K562 (cell line): ENCODE measurements at regions of chr1 and their contacts with region 1.

Region 1: GRCh38 chr1:58783993-58784757 is at the start of gene JUN:
- DNase-seq: peak; percentile 96 to 99 (median 98)
- ATAC-seq: peak; percentile 83
- H3K4me3 ChIP-seq: peak within 1 kb of the TSS; percentile 81
- H3K27ac ChIP-seq: peak within 1 kb of the TSS; percentile 96
- H3K4me1 ChIP-seq: peaks cover 9 to 37% of the 10 kb centered on the region in 2 experiments; a peak in 4 of 5 replicates
- H3K27me3 ChIP-seq: no peaks in the 10 kb centered on the region
- CTCF ChIP-seq: no peak; a peak in 1 of 6 replicates
- EP300 ChIP-seq: peak; percentile 39
- POLR2A ChIP-seq: peak; percentile 99
- RAD21 ChIP-seq: peak; percentile 17 to 29; a peak in 1 of 4 replicates
- polyA plus RNA-seq, gene JUN: 0.32 TPM

Region 2: GRCh38 chr1:58815069-58815685 is 31.0 kb after region 1 on chr1:
- CTCF ChIA-PET with region 1: no interaction called
- POLR2A ChIA-PET with region 1: interaction called, 3 read pairs
- in situ Hi-C with region 1: no loop called
- intact Hi-C with region 1: loop called (anchors 1 kb)
- DNase-seq: peak; percentile 83 to 91 (median 86)
- ATAC-seq: peak; percentile 89
- H3K4me3 ChIP-seq: peak overlapping the region; percentile 47
- H3K27ac ChIP-seq: peak overlapping the region; percentile 93
- H3K4me1 ChIP-seq: peaks cover 21 to 27% of the 10 kb centered on the region in 2 experiments
- H3K27me3 ChIP-seq: no peaks in the 10 kb centered on the region
- CTCF ChIP-seq: no peak
- EP300 ChIP-seq: peak; percentile 72
- POLR2A ChIP-seq: no peak
- RAD21 ChIP-seq: peak in 1 of 2 experiments; percentile 11; a peak in 1 of 4 replicates

Region 3: DNA sequence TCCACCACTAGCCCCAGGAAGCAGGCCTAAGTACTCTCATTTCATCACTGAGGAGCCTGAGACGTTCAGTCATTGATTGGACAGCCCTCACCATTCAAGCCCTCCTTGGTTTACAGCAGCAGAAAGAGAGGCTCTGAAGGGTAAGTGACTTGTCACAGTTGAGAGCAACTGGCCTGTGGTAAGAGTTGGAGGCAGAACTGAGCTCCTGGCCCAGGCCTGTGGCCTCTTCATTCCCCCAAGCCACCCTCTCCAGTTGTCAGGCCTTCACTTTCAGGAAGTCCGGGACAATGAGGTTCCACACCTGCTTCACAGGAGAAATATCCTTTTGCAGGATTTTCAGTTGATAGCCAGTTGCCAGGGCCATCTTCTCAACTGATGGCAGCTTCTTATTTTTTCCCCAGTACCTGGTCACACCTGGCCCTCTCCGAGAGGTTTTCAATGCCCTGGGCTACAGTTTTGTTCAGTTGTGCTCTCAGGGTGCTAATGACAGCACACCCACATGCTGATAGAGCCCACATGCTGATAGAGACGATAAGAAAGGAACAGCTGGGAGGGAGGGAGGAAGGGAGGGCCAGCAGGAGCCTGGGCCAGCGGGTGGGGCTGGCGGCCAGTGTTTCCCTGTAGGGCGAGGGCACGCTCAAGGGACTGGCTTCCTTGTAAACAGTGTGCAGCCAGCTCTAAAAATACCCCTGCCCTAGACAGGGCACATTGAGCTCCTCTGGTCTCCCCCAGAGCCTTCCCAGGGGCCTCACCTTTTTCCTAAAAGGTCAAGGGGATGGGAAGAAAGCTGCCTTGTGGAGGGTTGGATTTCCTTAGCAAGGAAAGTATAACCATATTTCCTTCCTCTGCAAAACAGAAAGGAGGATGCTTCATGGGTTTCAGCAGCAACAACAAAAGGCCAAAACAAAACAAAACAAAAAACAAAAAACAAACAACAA is 112.3 kb after region 1 on chr1:
- CTCF ChIA-PET with region 1: no interaction called
- POLR2A ChIA-PET with region 1: interaction called, 9 read pairs
- in situ Hi-C with region 1: no loop called
- intact Hi-C with region 1: loop called (anchors 2 kb)
- DNase-seq: peak; percentile 75 to 83 (median 80)
- ATAC-seq: peak; percentile 54
- H3K4me3 ChIP-seq: no peak overlapping the region
- H3K27ac ChIP-seq: peak overlapping the region; percentile 56
- H3K4me1 ChIP-seq: peaks cover 54 to 83% of the 10 kb centered on the region in 2 experiments
- H3K27me3 ChIP-seq: no peaks in the 10 kb centered on the region
- CTCF ChIP-seq: peak in 1 of 3 experiments; percentile 2; a peak in 1 of 6 replicates
- EP300 ChIP-seq: peak; percentile 73
- POLR2A ChIP-seq: no peak
- RAD21 ChIP-seq: peak; percentile 33 to 53

Region 4: GRCh38 chr1:59076612-59077011 is 292.4 kb after region 1 on chr1:
- CTCF ChIA-PET with region 1: no interaction called
- POLR2A ChIA-PET with region 1: interaction called, 3 read pairs
- in situ Hi-C with region 1: no loop called
- intact Hi-C with region 1: loop called (anchors 10 kb)
- DNase-seq: peak in 3 of 4 experiments; percentile 12 to 66 (median 59)
- ATAC-seq: peak; percentile 88
- H3K4me3 ChIP-seq: no peak overlapping the region
- H3K27ac ChIP-seq: no peak overlapping the region
- H3K4me1 ChIP-seq: peaks cover 12 to 23% of the 10 kb centered on the region in 2 experiments
- H3K27me3 ChIP-seq: no peaks in the 10 kb centered on the region
- CTCF ChIP-seq: peak in 1 of 3 experiments; percentile 45; a peak in 2 of 6 replicates
- EP300 ChIP-seq: peak; percentile 52; the same call in 1 of the 2 replicates
- POLR2A ChIP-seq: no peak
- RAD21 ChIP-seq: peak; percentile 58 to 65

Region 5: GRCh38 chr1:59285691-59286090 is 501.5 kb after region 1 on chr1:
- CTCF ChIA-PET with region 1: no interaction called
- POLR2A ChIA-PET with region 1: no interaction called
- in situ Hi-C with region 1: loop called (anchors 10 kb)
- intact Hi-C with region 1: no loop called
- DNase-seq: no peak
- ATAC-seq: no peak
- H3K4me3 ChIP-seq: no peak overlapping the region
- H3K27ac ChIP-seq: no peak overlapping the region
- H3K4me1 ChIP-seq: peaks cover 0 to 7% of the 10 kb centered on the region in 2 experiments; a peak in 3 of 5 replicates
- H3K27me3 ChIP-seq: peaks cover 0 to 9% of the 10 kb centered on the region in 2 experiments; a peak in 2 of 5 replicates
- CTCF ChIP-seq: no peak
- EP300 ChIP-seq: no peak
- POLR2A ChIP-seq: no peak
- RAD21 ChIP-seq: no peak